Right ventricle myocardium superior (tissue), 1 donor: ENCODE measurements at regions of chr20 and their contacts with region 1.

Region 1: GRCh38 chr20:47272893-47273590 is 83.5 kb downstream of the ZMYND8 start:
- DNase-seq: no peak
- ATAC-seq: peak; percentile 74

Region 2: GRCh38 chr20:47196091-47197081 is 76.7 kb before region 1 on chr20:
- intact Hi-C with region 1: loop called (anchors 5 kb)
- DNase-seq: peak; percentile 80
- ATAC-seq: peak; percentile 91

Region 3: DNA sequence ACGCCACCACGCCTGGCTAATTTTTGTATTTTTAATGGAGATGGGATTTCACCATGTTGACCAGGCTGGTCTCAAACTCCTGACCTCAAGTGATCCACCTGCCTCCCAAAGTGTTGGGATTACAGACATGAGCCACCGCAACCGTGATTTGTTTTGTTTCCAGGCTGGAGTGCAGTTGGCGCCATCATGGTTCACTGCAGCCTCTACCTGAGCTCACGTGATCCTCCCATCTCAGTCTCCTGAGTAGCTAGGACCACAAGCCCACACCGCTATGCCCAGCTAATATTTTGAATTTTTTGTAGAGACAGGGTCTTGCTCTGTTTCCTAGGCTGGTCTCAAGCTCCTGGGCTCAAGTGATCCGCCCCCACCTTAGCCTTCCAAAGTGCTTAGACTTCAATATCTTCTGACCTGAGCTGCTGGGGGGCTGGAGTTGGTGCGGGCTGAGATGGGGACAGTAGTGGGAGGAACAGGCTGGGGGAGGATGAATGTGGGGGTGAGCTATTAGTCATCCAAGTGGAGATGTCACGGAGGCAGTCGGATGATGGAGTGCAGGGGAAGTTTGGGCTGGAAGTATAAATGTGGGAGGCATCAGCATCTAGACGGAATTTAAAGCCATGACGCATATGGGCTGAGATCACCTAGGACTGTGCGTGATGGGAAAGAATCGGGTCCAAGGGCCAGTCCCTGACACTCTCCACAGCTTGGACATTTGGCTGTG is 106.5 kb after region 1 on chr20:
- intact Hi-C with region 1: loop called (anchors 2 kb)
- DNase-seq: no peak
- ATAC-seq: no peak

Region 4: DNA sequence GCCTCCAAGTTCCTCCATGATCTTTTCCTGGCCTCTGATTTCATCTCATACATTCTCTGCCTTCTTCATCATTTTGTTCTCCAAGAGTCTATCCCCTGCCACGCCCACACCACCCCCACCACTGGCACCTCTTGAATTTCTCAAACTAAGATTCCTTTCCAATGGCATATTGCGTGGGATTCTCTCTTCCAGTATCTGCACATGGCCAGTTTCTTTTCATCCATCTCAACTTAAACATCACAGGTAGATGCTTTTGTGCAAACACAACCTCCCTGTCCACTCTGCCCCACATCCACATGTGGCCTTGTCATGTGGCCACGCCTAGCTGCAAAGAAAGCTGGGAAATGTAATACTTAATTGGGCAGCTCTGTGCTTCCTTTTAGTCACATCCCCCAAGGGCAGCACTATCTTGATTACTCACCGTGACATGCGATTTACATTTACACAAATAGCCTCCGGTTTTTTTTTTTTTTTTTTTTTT is 116.9 kb after region 1 on chr20:
- intact Hi-C with region 1: loop called (anchors 2 kb)
- DNase-seq: no peak
- ATAC-seq: no peak

Region 5: GRCh38 chr20:47620808-47621805 is 348.1 kb after region 1 on chr20:
- intact Hi-C with region 1: loop called (anchors 10 kb)
- DNase-seq: no peak
- ATAC-seq: peak; percentile 69